HepG2 (cell line): ENCODE measurements at regions of chr17 and their contacts with region 1.

Region 1: GRCh38 chr17:75515496-75516254 is at the start of gene CASKIN2:
- DNase-seq: peak; percentile 86
- ATAC-seq: peak; percentile 65
- H3K4me3 ChIP-seq: peak within 1 kb of the TSS; percentile 68 to 93 (median 79)
- H3K27ac ChIP-seq: peak within 1 kb of the TSS; percentile 51
- H3K4me1 ChIP-seq: peaks cover 53% of the 10 kb centered on the region
- H3K27me3 ChIP-seq: no peaks in the 10 kb centered on the region; a peak in 1 of 5 replicates
- CTCF ChIP-seq: peak; percentile 98
- EP300 ChIP-seq: 0 out of 4 replicates have a peak, but pooled peaks of 1 of the 2 experiments have one; percentile 4
- POLR2A ChIP-seq: no peak
- RAD21 ChIP-seq: peak; percentile 99
- total RNA-seq, gene CASKIN2: 5.2 and 10.6 TPM in 2 replicates

Region 2: GRCh38 chr17:75087558-75088453 is 427.9 kb before region 1 on chr17 and contains the start of gene SLC16A5:
- CTCF ChIA-PET with region 1: no interaction called
- POLR2A ChIA-PET with region 1: no interaction called
- in situ Hi-C with region 1: no loop called
- intact Hi-C with region 1: loop called (anchors 2 kb)
- DNase-seq: peak; percentile 91
- ATAC-seq: peak; percentile 63
- H3K4me3 ChIP-seq: peak within 1 kb of the TSS; percentile 57 to 76 (median 68)
- H3K27ac ChIP-seq: peak within 1 kb of the TSS; percentile 63
- H3K4me1 ChIP-seq: peaks cover 97% of the 10 kb centered on the region
- H3K27me3 ChIP-seq: 0 out of 5 replicates have a peak, but pooled peaks cover 0 to 11% of the 10 kb centered on the region in 2 experiments
- CTCF ChIP-seq: no peak
- EP300 ChIP-seq: peak in 1 of 2 experiments; percentile 19; a peak in 1 of 4 replicates
- POLR2A ChIP-seq: no peak; a peak in 1 of 4 replicates
- RAD21 ChIP-seq: peak; percentile 22
- total RNA-seq, gene SLC16A5: 0.42 and 0.69 TPM in 2 replicates

Region 3: DNA sequence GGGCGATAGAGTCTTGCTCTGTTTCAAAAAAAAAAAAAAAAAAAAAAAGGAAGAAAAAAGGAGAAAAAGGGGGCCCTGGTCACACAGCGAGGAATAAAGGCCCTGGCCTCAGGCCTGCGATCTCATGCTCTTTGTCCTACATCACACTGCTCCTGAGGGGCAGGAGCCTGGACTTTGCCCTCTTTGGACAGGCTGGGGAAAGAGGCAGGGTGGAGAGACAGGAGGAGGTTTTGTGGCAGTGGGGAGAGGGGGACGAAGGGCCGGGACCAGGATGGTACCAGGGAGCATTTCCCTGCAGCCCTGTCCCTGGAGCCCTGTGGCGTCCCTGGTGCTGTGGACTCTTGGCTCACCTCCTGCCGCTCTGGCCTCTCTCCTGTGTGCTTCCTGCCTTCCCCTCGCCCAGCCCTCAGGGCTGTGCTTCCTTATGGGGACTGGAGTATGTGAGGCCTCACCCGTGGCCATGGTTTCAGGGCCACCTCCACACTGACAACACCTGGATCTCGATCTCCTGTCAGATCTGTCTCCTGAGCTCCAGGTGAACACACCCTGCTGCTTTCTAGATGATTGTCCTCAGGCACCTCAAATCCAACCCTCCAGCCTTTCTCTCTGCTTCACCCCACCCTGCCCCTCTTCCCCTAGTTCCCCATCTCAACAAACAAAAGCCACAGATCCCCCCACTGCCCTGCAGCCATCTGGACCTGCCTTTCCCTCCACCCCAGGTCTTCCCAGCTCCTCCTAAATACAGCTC is 206.5 kb before region 1 on chr17:
- CTCF ChIA-PET with region 1: no interaction called
- POLR2A ChIA-PET with region 1: no interaction called
- in situ Hi-C with region 1: no loop called
- intact Hi-C with region 1: no loop called
- DNase-seq: peak; percentile 94
- ATAC-seq: peak; percentile 87
- H3K4me3 ChIP-seq: peak overlapping the region; percentile 35 to 69 (median 48); a peak in 5 of 6 replicates
- H3K27ac ChIP-seq: peak overlapping the region; percentile 89
- H3K4me1 ChIP-seq: peaks cover 66% of the 10 kb centered on the region
- H3K27me3 ChIP-seq: no peaks in the 10 kb centered on the region
- CTCF ChIP-seq: no peak; the same call in 1 of the 2 replicates
- EP300 ChIP-seq: peak; percentile 53 to 67; a peak in 2 of 4 replicates
- POLR2A ChIP-seq: peak; percentile 93
- RAD21 ChIP-seq: peak; percentile 70

Region 4: GRCh38 chr17:75456417-75457046 is 59.1 kb before region 1 on chr17 and contains the start of gene TMEM94:
- CTCF ChIA-PET with region 1: no interaction called
- POLR2A ChIA-PET with region 1: interaction called, 12 read pairs
- in situ Hi-C with region 1: no loop called
- intact Hi-C with region 1: loop called (anchors 5 kb)
- DNase-seq: peak; percentile 99
- ATAC-seq: peak; percentile 90
- H3K4me3 ChIP-seq: peak within 1 kb of the TSS; percentile 70 to 98 (median 87)
- H3K27ac ChIP-seq: peak within 1 kb of the TSS; percentile 93
- H3K4me1 ChIP-seq: peaks cover 87% of the 10 kb centered on the region
- H3K27me3 ChIP-seq: no peaks in the 10 kb centered on the region; a peak in 1 of 5 replicates
- CTCF ChIP-seq: no peak
- EP300 ChIP-seq: no peak
- POLR2A ChIP-seq: peak; percentile 69 to 82; a peak in 3 of 4 replicates
- RAD21 ChIP-seq: no peak
- total RNA-seq, gene TMEM94: 20.8 and 32.6 TPM in 2 replicates

Region 5: DNA sequence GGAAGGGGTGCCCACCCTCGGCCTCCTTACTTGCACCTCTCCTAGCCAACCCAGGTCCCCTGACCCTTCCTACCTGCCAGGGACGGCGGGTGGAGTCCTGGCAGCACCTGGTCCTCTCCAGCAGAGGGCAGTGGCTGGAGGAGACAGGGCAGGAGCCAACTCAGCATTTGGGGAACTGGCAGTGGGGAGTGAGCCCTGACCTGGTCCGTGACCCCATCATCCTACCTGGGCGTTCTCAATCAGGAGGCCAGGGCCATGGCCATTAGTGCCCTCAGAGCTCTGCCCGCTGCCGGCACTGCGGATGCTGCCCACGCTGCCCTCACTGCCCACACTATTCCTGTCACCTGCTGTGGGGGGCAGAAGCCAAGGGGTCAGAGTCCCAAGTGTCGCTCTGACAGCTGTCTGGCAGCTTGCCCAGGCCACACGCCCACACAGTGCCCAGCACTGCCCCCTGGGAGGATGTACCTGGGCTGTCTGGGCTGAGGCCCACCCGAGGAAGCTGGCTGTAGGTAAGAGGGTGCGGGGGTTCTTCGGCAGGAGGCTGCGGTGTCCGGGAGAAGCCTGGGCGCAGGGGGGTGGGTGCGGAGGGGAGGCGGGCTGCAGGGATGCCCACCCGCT is 11.2 kb before region 1 on chr17:
- CTCF ChIA-PET with region 1: interaction called, 22 read pairs
- POLR2A ChIA-PET with region 1: interaction called, 4 read pairs
- in situ Hi-C with region 1: no loop called
- intact Hi-C with region 1: no loop called
- DNase-seq: peak; percentile 51
- ATAC-seq: peak; percentile 71
- H3K4me3 ChIP-seq: no peak overlapping the region
- H3K27ac ChIP-seq: no peak overlapping the region
- H3K4me1 ChIP-seq: peaks cover 32% of the 10 kb centered on the region
- H3K27me3 ChIP-seq: no peaks in the 10 kb centered on the region
- CTCF ChIP-seq: peak; percentile 89
- EP300 ChIP-seq: no peak
- POLR2A ChIP-seq: no peak
- RAD21 ChIP-seq: peak; percentile 91

Region 6: DNA sequence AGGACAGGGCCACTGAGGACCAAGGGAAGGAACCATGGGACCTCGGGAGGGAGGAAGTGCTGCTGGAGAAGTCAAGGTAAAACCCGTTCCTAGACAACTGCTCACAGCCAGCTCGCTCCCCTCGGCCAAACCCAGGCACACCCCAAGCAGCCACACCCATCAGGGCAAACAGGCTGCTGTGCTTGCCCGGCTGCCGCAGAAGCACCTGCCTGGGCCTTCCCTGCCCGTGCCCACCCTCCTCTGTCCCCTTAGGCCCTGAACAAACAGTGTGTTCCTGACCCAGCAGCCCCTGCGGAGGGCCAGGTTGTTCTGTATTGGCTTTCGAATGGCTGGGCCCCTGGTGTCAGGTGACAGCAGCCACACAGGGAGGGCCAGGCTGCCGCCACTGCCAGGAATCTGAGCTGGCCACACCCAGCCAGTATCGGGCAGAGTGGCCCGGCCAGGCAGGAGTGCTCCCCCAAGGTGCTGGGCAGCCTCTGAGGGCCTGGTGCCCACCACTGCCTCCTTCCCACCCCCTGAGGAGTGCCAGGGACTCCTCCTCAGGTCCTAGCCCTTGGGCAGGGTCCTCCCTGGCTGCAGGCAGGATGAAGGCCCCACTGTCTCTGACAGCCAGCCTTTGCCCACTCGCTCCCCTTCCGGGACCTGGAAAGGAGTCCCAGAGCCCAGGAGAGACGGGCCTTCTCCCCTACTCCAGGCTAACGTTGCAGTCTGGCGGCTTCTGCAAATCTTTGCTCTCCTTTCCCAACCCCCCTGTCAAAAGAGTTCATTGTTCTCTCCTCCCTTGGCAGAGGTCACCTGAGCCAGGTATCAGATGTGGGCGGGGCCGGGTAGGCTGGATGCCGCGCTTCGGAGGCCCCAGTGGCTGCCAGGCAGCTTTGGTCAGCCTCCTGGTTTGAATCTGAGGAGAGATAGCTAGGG is 33.8 kb after region 1 on chr17:
- CTCF ChIA-PET with region 1: no interaction called
- POLR2A ChIA-PET with region 1: interaction called, 12 read pairs
- in situ Hi-C with region 1: no loop called
- intact Hi-C with region 1: no loop called
- DNase-seq: peak; percentile 89
- ATAC-seq: peak; percentile 88
- H3K4me3 ChIP-seq: peak overlapping the region; percentile 43 to 72 (median 55); a peak in 5 of 6 replicates
- H3K27ac ChIP-seq: peak overlapping the region; percentile 66
- H3K4me1 ChIP-seq: peaks cover 59% of the 10 kb centered on the region
- H3K27me3 ChIP-seq: no peaks in the 10 kb centered on the region
- CTCF ChIP-seq: peak; percentile 44
- EP300 ChIP-seq: peak in 1 of 2 experiments; percentile 43; a peak in 2 of 4 replicates
- POLR2A ChIP-seq: peak; percentile 59 to 88; a peak in 3 of 4 replicates
- RAD21 ChIP-seq: 0 out of 2 replicates have a peak, but pooled peaks have one; percentile 13

Region 7: DNA sequence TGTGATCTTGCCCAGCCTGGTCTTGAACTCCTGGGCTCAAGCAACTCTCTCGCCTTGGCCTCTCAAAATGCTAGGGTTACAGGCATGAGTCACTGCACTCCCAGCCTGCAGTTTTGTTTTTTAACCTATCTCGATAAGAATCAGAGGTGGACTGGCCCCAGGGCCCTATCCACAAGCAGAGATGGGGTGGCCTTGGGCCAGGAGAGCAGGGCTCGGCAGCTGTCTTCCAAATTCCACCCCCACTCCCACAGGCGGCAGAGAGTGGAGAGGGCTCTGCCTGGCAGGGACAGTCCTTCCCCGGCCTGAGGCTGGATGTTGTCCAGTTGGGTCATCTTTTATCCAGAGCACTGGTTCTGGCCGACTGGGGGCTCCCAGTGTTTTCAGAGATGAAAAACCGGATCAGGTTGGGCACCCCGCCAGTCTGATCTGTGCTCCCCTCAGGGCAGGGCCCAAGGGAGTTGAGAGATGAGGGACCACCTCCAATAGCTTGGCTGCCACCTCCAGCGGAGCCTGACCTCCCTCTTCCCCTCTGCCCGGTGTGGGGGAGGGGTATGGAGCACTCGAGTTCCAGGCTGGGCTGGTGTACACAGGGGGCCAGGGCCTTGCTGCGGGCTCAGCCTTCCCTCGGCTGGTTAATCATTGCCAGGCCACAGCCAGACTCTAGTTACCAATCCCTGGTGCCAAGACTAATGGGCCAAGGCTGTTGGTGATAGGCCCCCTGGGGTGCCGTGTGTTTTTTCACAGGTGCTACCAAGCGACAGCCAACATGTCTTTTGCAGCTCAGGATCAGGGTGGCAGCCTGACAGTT is 41.6 kb after region 1 on chr17:
- CTCF ChIA-PET with region 1: interaction called, 3 read pairs
- POLR2A ChIA-PET with region 1: interaction called, 12 read pairs
- in situ Hi-C with region 1: no loop called
- intact Hi-C with region 1: no loop called
- DNase-seq: peak; percentile 98
- ATAC-seq: peak; percentile 89
- H3K4me3 ChIP-seq: peak overlapping the region; percentile 32 to 69 (median 39)
- H3K27ac ChIP-seq: peak overlapping the region; percentile 81
- H3K4me1 ChIP-seq: peaks cover 90% of the 10 kb centered on the region
- H3K27me3 ChIP-seq: no peaks in the 10 kb centered on the region
- CTCF ChIP-seq: peak; percentile 50
- EP300 ChIP-seq: peak in 1 of 2 experiments; percentile 80; a peak in 2 of 4 replicates
- POLR2A ChIP-seq: peak; percentile 50 to 81; a peak in 3 of 4 replicates
- RAD21 ChIP-seq: peak; percentile 62